ENCODE measurements at regions of chr6 and their contacts with region 1.

Region 1: DNA sequence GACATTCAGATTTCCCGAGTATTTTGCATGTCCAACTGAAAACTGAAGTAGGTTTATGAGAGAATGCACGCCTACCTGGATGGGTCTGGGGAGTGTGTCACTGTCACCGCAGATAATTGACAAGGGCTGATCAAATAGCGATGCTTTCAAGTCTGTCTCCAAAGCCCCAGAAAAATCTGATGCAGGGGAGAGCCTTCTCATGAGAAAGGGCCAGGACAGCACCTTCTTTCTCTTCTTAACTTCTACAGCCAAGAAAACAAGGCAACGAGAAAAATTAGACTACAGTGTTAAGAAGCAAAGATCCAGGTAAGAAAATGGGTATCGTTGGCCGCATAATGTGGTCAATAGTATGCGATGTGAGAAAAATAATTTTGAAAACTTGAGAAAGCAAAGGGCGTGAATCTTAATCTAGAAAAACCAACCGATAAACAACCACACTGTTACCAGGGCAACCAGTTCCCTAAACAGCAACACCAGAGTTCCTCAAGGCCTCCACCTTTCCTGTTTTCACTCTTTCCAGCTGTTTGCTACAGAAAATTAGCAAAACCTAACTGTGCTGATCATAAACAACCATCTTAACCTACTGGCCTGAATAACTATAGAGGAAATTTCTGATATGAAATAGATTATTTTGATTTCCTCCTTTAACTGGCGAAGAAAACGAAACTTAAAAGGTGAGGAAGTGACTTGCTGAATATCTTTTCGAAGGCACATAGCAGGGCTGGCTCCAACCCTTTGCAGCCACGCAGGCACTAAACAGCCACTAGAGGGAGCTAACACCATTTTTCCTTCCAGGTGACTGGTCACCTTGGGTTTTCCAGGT is 2.6 kb downstream of the TAGAP start:
- DNase-seq: peak; percentile 71
- ATAC-seq: peak; percentile 72

Region 2: DNA sequence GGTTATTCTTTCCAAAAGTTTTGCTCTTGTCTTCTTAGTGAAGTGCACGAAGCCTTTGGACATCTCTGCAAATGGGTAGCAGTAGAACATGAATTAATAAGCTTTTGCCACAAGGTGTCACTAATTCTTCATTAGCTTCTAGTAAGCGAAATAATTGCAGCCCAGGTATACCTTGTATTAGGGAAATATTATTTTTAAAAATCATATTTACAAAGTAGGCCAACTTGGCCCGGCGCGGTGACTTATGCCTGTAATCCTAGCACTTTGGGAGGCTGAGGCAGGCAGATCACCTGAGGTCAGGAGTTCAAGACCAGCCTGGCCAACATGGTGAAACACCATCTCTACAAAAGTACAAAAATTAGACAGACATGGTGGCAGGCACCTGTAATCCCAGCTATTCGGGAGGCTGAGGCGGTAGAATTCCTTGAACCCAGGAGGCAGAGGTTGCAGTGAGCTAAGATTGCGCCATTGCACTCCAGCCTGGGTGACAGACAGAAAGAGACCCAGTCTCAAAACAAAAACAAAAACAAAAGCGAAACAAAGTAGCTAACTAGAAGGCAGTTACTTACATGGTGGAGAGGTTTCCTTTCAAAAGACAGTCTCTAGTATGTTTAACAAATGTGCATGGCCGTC is 33.4 kb before region 1 on chr6:
- intact Hi-C with region 1: loop called (anchors 5 kb)
- DNase-seq: no peak
- ATAC-seq: no peak

Region 3: DNA sequence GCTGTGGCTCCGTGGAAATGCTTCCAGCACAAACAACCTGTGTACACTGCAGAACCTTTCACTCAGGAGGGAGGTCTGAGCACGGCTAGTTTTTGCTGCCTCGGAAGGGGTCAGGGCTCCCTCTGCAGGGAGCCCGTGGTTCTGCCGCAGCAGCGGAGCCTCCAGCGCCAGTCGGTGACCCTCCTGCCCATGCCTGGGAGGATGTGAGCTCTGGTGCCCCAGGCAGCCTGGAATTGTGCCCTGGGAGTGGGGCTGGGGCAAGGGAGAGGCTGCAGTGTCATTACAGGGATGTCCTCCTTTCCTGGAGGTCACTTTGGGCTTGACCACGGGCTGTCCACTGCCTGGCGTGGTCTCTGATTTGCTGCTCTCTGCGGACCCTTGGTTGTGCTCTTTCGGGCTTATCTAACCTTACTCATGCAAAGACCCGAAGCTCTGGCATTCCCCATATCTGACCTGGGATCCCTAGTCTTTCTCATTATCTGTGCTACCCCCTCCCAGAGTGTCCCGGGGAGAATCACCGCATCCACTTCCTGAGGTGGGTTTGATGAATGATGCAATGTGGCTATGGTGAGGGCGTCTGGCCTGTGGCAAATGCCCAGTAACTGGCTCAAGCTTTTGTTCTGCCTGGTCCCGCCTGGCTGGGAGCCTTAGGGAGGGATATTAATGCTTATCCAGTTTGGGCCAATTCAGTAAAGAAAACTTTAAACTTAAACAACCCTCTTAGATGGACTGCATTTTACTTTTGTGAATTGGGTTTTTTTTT is 62.1 kb after region 1 on chr6:
- intact Hi-C with region 1: loop called (anchors 2 kb)
- DNase-seq: peak; percentile 85
- ATAC-seq: peak; percentile 79

Region 4: GRCh38 chr6:159134701-159135364 is 92.6 kb after region 1 on chr6:
- intact Hi-C with region 1: loop called (anchors 1 kb)
- DNase-seq: no peak
- ATAC-seq: peak; percentile 68

Region 5: DNA sequence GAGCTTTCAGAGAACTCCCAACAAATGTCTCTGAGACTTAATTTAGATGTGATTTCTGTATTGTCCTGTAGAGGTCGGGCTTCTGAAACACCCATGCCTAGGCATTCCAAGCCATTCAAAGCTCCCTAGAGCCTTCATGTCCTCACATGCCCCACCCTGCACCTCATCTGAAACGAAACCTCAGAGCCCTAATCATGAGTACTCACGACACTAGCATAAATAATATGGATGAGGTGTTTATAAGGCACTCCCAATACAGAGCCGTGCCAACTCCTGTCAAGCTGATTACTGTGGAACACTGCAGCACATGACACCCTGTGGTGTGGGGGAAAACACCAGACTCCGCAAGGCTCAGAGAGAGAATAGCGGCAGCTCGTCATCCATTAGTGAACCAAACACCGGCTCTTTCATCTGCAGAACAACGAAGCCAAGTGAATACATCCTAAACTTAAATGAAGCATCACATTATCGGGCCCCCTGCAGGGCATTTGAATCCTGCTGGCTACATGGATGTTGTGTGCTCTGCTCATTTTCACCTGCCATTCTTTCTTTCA is 210.8 kb after region 1 on chr6:
- intact Hi-C with region 1: no loop called
- DNase-seq: no peak
- ATAC-seq: peak; percentile 33

Region 6: DNA sequence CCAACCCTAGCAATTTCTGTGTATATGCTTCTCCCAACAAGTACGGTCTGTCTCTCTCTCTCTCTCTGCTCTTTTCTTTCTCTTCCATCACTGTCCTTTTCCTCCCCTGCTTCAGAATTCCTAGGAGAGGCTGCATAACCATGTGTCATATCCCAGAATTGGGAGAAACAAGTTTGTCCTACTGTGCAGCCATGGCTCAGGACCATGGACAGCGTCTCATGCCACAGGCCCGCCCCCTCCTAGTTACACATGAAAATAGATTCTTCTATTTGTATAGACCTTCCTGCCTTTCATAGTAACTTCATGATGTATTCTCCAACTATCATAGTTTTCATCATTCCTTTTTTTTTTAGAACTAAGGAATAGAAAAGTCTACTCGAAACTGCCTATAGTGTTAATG is 225.0 kb after region 1 on chr6:
- intact Hi-C with region 1: no loop called
- DNase-seq: no peak
- ATAC-seq: no peak

Measured in Right ventricle myocardium inferior (tissue), 1 donor.